Activated naive CD4-positive, alpha-beta T cell treated with anti-CD3 and anti-CD28 coated beads, Interleukin-2, amount 10 ng/mL, durations not matched to agents 7 days and 5 days (primary cell): ENCODE measurements at regions of chr12 and their contacts with region 1.

Region 1: GRCh38 chr12:110555577-110556406 is 27.3 kb downstream of the PPTC7 start:
- DNase-seq: no peak
- H3K4me3 Mint-ChIP-seq: no peak overlapping the region
- H3K27ac Mint-ChIP-seq: no peak overlapping the region
- H3K4me1 Mint-ChIP-seq: peaks cover 29% of the 10 kb centered on the region
- H3K27me3 Mint-ChIP-seq: no peaks in the 10 kb centered on the region

Region 2: GRCh38 chr12:110475426-110475825 is 80.4 kb before region 1 on chr12:
- CTCF ChIA-PET with region 1: no interaction called
- DNase-seq: no peak
- H3K4me3 Mint-ChIP-seq: no peak overlapping the region
- H3K27ac Mint-ChIP-seq: no peak overlapping the region
- H3K4me1 Mint-ChIP-seq: peaks cover 9% of the 10 kb centered on the region
- H3K27me3 Mint-ChIP-seq: no peaks in the 10 kb centered on the region

Region 3: GRCh38 chr12:110583137-110584059 is 27.6 kb after region 1 on chr12 and contains the start of gene PPTC7:
- CTCF ChIA-PET with region 1: interaction called, 12 read pairs
- DNase-seq: peak; percentile 98
- H3K4me3 Mint-ChIP-seq: peak within 1 kb of the TSS; percentile 88
- H3K27ac Mint-ChIP-seq: peak within 1 kb of the TSS; percentile 97
- H3K4me1 Mint-ChIP-seq: peaks cover 62% of the 10 kb centered on the region
- H3K27me3 Mint-ChIP-seq: no peaks in the 10 kb centered on the region

Region 4: DNA sequence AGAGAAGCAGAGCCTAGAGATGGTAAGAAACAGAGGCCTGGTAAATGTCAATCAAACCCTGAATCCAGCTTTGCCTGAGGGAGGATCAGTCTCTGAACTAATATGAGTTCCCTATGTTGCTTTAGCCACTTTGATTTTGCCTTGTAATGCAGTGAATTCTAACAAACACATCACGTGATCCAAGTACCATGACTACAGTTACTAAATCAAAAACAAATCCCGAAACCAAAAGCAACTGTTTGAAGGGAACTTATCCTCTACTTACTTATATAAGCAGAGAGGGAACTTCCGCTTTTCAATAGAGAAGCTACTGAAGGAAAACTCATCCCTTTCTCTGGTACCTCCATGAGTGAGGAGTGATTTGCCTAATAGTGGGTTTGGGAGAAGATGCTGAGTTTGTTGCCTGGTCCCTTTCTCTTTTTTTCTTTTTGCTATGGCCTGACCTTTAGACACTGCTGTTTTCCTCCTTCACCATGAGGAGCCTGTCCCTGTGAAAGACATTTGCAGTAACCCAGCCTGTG is 35.1 kb after region 1 on chr12:
- CTCF ChIA-PET with region 1: interaction called, 18 read pairs
- DNase-seq: no peak
- H3K4me3 Mint-ChIP-seq: peak overlapping the region; percentile 2
- H3K27ac Mint-ChIP-seq: peak overlapping the region; percentile 85
- H3K4me1 Mint-ChIP-seq: peaks cover 33% of the 10 kb centered on the region
- H3K27me3 Mint-ChIP-seq: no peaks in the 10 kb centered on the region